T-cell (primary cell): ENCODE measurements at regions of chr12 and their contacts with region 1.

Region 1: DNA sequence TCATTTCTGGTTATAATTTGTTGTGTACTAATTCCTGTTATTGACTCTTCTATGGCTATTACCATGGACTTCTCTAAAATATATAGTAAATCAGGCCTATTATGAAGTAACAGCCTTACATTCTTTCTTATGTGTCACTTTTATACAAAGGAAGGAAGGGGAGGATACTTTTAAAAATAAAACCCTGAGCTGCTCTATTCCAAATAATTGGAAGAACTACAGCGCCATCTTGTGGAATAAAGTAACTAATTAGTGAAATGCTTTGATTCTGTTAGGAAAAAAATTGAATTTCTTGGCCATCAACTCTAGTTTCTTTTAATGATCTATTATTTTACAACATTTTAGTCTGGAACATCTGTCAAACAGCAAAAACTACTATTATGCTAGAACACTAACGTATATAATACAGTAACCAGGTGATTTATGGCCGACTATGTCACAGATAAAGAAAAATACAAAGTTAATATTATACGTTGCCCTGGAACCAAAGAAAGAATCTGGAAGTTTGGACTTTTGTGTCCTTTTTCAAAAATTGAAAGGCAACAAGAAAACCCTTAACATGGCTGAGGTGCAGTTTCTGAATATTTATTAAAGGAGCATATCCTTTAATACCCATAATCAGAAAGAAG is 55.0 kb upstream of the NELL2 start:
- DNase-seq: peak in 1 of 35 experiments; percentile 77
- ATAC-seq: peak; percentile 46 to 61 (median 50)
- H3K4me3 ChIP-seq: no peak overlapping the region
- H3K4me3 Mint-ChIP-seq: no peak overlapping the region
- H3K27ac ChIP-seq: no peak overlapping the region
- H3K27ac Mint-ChIP-seq: no peak overlapping the region
- H3K4me1 ChIP-seq: peaks cover 0 to 3% of the 10 kb centered on the region in 2 experiments
- H3K4me1 Mint-ChIP-seq: peaks cover 2 to 5% (median 4%) of the 10 kb centered on the region in 3 donors
- H3K27me3 ChIP-seq: no peaks in the 10 kb centered on the region
- H3K27me3 Mint-ChIP-seq: peaks cover 0 to 4% of the 10 kb centered on the region in 2 donors

Region 2: DNA sequence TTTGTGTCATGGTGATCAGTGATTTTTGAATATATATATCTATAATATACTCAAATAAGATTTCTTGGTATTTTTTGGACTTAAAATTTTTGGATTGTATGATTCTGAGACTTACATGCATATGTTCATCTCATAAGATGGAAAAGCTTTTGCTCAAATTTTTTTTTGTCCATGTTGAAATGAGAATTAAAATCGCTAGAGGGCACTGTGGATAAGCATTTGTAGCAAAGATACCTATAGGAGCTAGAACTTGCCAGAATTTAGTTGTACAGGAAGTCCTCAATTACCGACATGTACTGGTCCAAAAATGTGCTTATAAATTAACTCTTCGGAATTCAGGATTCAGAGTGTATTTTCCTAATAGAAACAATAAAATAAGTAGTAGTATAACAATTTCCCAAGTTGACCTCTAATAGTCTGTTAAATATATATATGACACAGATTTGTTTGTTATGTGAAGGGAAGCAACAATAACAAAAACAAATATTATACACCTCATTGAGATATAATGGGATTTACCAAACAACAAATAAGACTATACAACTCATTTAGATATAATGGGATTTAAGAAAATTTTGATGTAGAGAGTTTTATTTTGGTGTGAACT is 915.6 kb before region 1 on chr12:
- CTCF ChIA-PET with region 1: interaction called, 4 to 20 read pairs
- POLR2A ChIA-PET with region 1: no interaction called
- DNase-seq: peak in 1 of 35 experiments; percentile 64
- ATAC-seq: peak in 3 of 4 experiments; percentile 50 to 66 (median 57)
- H3K4me3 ChIP-seq: no peak overlapping the region
- H3K4me3 Mint-ChIP-seq: no peak overlapping the region
- H3K27ac ChIP-seq: no peak overlapping the region
- H3K27ac Mint-ChIP-seq: no peak overlapping the region
- H3K4me1 ChIP-seq: no peaks in the 10 kb centered on the region
- H3K4me1 Mint-ChIP-seq: peaks cover 0 to 2% (median 0%) of the 10 kb centered on the region in 3 donors
- H3K27me3 ChIP-seq: no peaks in the 10 kb centered on the region
- H3K27me3 Mint-ChIP-seq: peaks cover 0 to 4% of the 10 kb centered on the region in 2 donors

Region 3: GRCh38 chr12:44441155-44441554 is 489.9 kb before region 1 on chr12:
- CTCF ChIA-PET with region 1: no interaction called
- POLR2A ChIA-PET with region 1: no interaction called
- DNase-seq: no peak
- ATAC-seq: no peak
- H3K4me3 ChIP-seq: no peak overlapping the region
- H3K4me3 Mint-ChIP-seq: no peak overlapping the region
- H3K27ac ChIP-seq: no peak overlapping the region
- H3K27ac Mint-ChIP-seq: no peak overlapping the region
- H3K4me1 ChIP-seq: no peaks in the 10 kb centered on the region
- H3K4me1 Mint-ChIP-seq: no peaks in the 10 kb centered on the region
- H3K27me3 ChIP-seq: no peaks in the 10 kb centered on the region
- H3K27me3 Mint-ChIP-seq: peaks cover 0 to 15% of the 10 kb centered on the region in 2 donors

Region 4: DNA sequence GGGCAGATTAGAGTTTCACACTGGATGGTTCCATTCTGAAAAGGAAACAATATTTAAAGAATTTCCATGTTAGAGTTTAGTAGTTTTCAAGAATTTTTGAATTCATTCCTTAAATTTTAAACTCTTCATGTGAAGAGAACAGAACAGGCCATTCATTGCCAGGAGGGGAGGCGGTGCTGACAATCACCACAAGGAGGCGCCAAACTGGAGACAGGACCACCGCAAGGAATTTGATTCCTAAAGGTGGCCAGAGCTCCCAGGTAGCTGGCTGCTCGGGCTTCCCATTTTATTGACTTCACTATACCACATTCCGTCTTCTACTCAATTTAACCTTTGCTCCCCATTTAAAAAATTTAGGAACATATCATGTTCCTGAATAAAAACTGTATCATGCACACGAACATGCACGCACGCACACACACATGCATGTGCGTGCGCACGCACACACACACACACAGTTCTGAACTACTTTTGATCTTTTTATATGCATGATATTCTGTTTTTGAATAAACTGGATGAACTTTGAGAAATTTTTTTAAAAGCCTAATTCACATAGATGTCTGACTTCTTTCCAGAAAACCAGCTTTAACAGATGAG is 156.2 kb before region 1 on chr12:
- CTCF ChIA-PET with region 1: interaction called, 4 to 27 read pairs
- POLR2A ChIA-PET with region 1: no interaction called
- DNase-seq: peak; percentile 7 to 78 (median 50)
- ATAC-seq: peak in 1 of 4 experiments; percentile 60
- H3K4me3 ChIP-seq: no peak overlapping the region
- H3K4me3 Mint-ChIP-seq: no peak overlapping the region
- H3K27ac ChIP-seq: no peak overlapping the region
- H3K27ac Mint-ChIP-seq: no peak overlapping the region
- H3K4me1 ChIP-seq: no peaks in the 10 kb centered on the region
- H3K4me1 Mint-ChIP-seq: peaks cover 0 to 7% (median 4%) of the 10 kb centered on the region in 3 donors
- H3K27me3 ChIP-seq: no peaks in the 10 kb centered on the region
- H3K27me3 Mint-ChIP-seq: no peaks in the 10 kb centered on the region

Region 5: GRCh38 chr12:44812062-44812461 is 119.0 kb before region 1 on chr12:
- CTCF ChIA-PET with region 1: interaction called, 16 to 43 read pairs
- POLR2A ChIA-PET with region 1: interaction called in 1 of 2 experiments, 3 read pairs
- DNase-seq: peak in 27 of 35 experiments; percentile 16 to 83 (median 46)
- ATAC-seq: peak; percentile 70 to 85 (median 82)
- H3K4me3 ChIP-seq: no peak overlapping the region
- H3K4me3 Mint-ChIP-seq: no peak overlapping the region
- H3K27ac ChIP-seq: no peak overlapping the region
- H3K27ac Mint-ChIP-seq: peak overlapping the region; percentile 62 to 64
- H3K4me1 ChIP-seq: peaks cover 11 to 20% of the 10 kb centered on the region in 2 experiments
- H3K4me1 Mint-ChIP-seq: peaks cover 42 to 54% (median 53%) of the 10 kb centered on the region in 3 donors
- H3K27me3 ChIP-seq: no peaks in the 10 kb centered on the region
- H3K27me3 Mint-ChIP-seq: no peaks in the 10 kb centered on the region

Region 6: DNA sequence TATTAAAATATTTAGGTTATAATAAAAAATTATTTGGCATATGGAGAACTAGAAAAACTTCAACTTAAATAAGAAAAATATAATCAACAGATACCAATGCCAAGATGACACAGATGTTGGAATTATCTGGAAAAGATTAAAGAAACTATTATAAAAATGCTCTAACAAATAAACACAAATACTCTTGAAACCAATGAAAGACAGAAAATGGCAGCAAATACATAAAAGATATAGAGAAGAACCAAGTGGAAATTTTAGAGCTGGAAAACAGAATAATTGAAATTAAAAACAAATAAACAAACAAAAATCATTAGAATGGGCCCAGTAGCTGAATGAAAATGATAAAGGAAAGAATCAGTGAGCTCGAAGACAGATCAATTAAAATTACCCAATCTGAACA is 49.9 kb before region 1 on chr12:
- CTCF ChIA-PET with region 1: no interaction called
- POLR2A ChIA-PET with region 1: no interaction called
- DNase-seq: no peak
- ATAC-seq: no peak
- H3K4me3 ChIP-seq: no peak overlapping the region
- H3K4me3 Mint-ChIP-seq: no peak overlapping the region
- H3K27ac ChIP-seq: no peak overlapping the region
- H3K27ac Mint-ChIP-seq: no peak overlapping the region
- H3K4me1 ChIP-seq: peaks cover 0 to 10% of the 10 kb centered on the region in 2 experiments
- H3K4me1 Mint-ChIP-seq: peaks cover 7 to 10% (median 7%) of the 10 kb centered on the region in 3 donors
- H3K27me3 ChIP-seq: peaks cover 0 to 9% of the 10 kb centered on the region in 2 experiments
- H3K27me3 Mint-ChIP-seq: peaks cover 0 to 3% of the 10 kb centered on the region in 2 donors